ENCODE measurements at regions of chr1 and their contacts with region 1.

Region 1: GRCh38 chr1:33367485-33368405 is 46.8 kb upstream of the A3GALT2 start:
- DNase-seq: peak; percentile 72 to 92 (median 86)
- ATAC-seq: peak; percentile 99
- H3K4me3 ChIP-seq: no peak overlapping the region
- H3K4me3 Mint-ChIP-seq: no peak overlapping the region
- H3K27ac ChIP-seq: no peak overlapping the region
- H3K27ac Mint-ChIP-seq: no peak overlapping the region
- H3K4me1 ChIP-seq: no peaks in the 10 kb centered on the region
- H3K4me1 Mint-ChIP-seq: peaks cover 1% of the 10 kb centered on the region
- H3K27me3 ChIP-seq: no peaks in the 10 kb centered on the region
- H3K27me3 Mint-ChIP-seq: no peaks in the 10 kb centered on the region
- CTCF ChIP-seq: peak; percentile 86

Region 2: GRCh38 chr1:32876341-32877210 is 491.2 kb before region 1 on chr1:
- CTCF ChIA-PET with region 1: no interaction called
- POLR2A ChIA-PET with region 1: no interaction called
- intact Hi-C with region 1: loop called in 1 of 2 experiments (anchors 5 kb)
- DNase-seq: peak in 6 of 9 experiments; percentile 25 to 74 (median 68)
- ATAC-seq: peak; percentile 81
- H3K4me3 ChIP-seq: no peak overlapping the region
- H3K4me3 Mint-ChIP-seq: no peak overlapping the region
- H3K27ac ChIP-seq: no peak overlapping the region
- H3K27ac Mint-ChIP-seq: no peak overlapping the region
- H3K4me1 ChIP-seq: no peaks in the 10 kb centered on the region
- H3K4me1 Mint-ChIP-seq: peaks cover 9% of the 10 kb centered on the region
- H3K27me3 ChIP-seq: peaks cover 5 to 21% of the 10 kb centered on the region in 2 experiments
- H3K27me3 Mint-ChIP-seq: peaks cover 47% of the 10 kb centered on the region
- CTCF ChIP-seq: peak; percentile 61

Region 3: GRCh38 chr1:33111970-33112369 is 255.8 kb before region 1 on chr1:
- CTCF ChIA-PET with region 1: no interaction called
- POLR2A ChIA-PET with region 1: no interaction called
- intact Hi-C with region 1: loop called in 1 of 2 experiments (anchors 5 kb)
- DNase-seq: peak in 2 of 9 experiments; percentile 33 to 47
- ATAC-seq: no peak
- H3K4me3 ChIP-seq: no peak overlapping the region
- H3K4me3 Mint-ChIP-seq: no peak overlapping the region
- H3K27ac ChIP-seq: no peak overlapping the region
- H3K27ac Mint-ChIP-seq: no peak overlapping the region
- H3K4me1 ChIP-seq: no peaks in the 10 kb centered on the region
- H3K4me1 Mint-ChIP-seq: no peaks in the 10 kb centered on the region
- H3K27me3 ChIP-seq: no peaks in the 10 kb centered on the region
- H3K27me3 Mint-ChIP-seq: no peaks in the 10 kb centered on the region
- CTCF ChIP-seq: peak; percentile 30

Region 4: GRCh38 chr1:33455539-33456501 is 88.1 kb after region 1 on chr1:
- CTCF ChIA-PET with region 1: interaction called, 3 read pairs
- POLR2A ChIA-PET with region 1: no interaction called
- intact Hi-C with region 1: loop called in 1 of 2 experiments (anchors 5 kb)
- DNase-seq: peak in 4 of 9 experiments; percentile 9 to 65 (median 34)
- ATAC-seq: peak; percentile 73
- H3K4me3 ChIP-seq: no peak overlapping the region
- H3K4me3 Mint-ChIP-seq: no peak overlapping the region
- H3K27ac ChIP-seq: no peak overlapping the region
- H3K27ac Mint-ChIP-seq: no peak overlapping the region
- H3K4me1 ChIP-seq: no peaks in the 10 kb centered on the region
- H3K4me1 Mint-ChIP-seq: no peaks in the 10 kb centered on the region
- H3K27me3 ChIP-seq: no peaks in the 10 kb centered on the region
- H3K27me3 Mint-ChIP-seq: peaks cover 6% of the 10 kb centered on the region
- CTCF ChIP-seq: no peak